Activated naive CD8-positive, alpha-beta T cell treated with anti-CD3 and anti-CD28 coated beads, Interleukin-2, amount 10 ng/mL, durations not matched to agents 7 days and 5 days (primary cell): ENCODE measurements at regions of chr7 and their contacts with region 1.

Region 1: GRCh38 chr7:25179771-25180591 is 48.3 kb downstream of the NPVF start:
- DNase-seq: peak; percentile 100
- ATAC-seq: peak; percentile 95
- H3K4me3 Mint-ChIP-seq: peak overlapping the region; percentile 84
- H3K27ac Mint-ChIP-seq: peak overlapping the region; percentile 92
- H3K4me1 Mint-ChIP-seq: peaks cover 14% of the 10 kb centered on the region
- H3K27me3 Mint-ChIP-seq: peaks cover 5% of the 10 kb centered on the region

Region 2: GRCh38 chr7:25125137-25125946 is 54.6 kb before region 1 on chr7 and contains the start of gene CYCS:
- POLR2A ChIA-PET with region 1: interaction called, 10 read pairs
- DNase-seq: peak; percentile 99
- ATAC-seq: peak; percentile 95
- H3K4me3 Mint-ChIP-seq: peak within 1 kb of the TSS; percentile 99
- H3K27ac Mint-ChIP-seq: peak within 1 kb of the TSS; percentile 100
- H3K4me1 Mint-ChIP-seq: peaks cover 17% of the 10 kb centered on the region
- H3K27me3 Mint-ChIP-seq: no peaks in the 10 kb centered on the region
- total RNA-seq, gene CYCS: 85.6 to 94.7 TPM

Region 3: DNA sequence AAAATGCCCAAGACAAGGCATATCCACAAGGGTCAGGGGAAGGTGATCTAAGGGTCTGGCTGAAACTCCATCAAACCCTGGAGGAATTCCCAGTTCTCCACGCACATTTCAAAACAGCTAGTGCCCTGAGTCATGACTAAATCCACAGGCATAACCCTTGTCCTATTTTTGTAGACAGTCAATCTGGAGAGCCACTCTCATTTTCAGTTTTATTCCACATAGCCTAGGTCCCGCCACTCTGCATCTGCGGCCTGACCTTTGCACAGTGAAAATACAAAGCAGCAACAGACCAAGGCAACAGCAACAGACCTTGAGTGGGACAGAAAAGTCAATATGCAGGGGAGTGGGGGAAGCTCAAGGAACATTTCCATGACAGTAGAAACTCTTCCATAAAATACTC is 249.8 kb after region 1 on chr7:
- POLR2A ChIA-PET with region 1: no interaction called
- DNase-seq: no peak
- ATAC-seq: no peak
- H3K4me3 Mint-ChIP-seq: no peak overlapping the region
- H3K27ac Mint-ChIP-seq: no peak overlapping the region
- H3K4me1 Mint-ChIP-seq: peaks cover 3% of the 10 kb centered on the region
- H3K27me3 Mint-ChIP-seq: peaks cover 7% of the 10 kb centered on the region